Gastrocnemius medialis (tissue), 4 donors: ENCODE measurements at regions of chr2 and their contacts with region 1.

Region 1: GRCh38 chr2:27409321-27410073 is at the start of gene PPM1G:
- DNase-seq: peak; percentile 90 to 92
- ATAC-seq: peak; percentile 94 to 95
- H3K4me3 ChIP-seq: peak within 1 kb of the TSS; percentile 74 to 98 (median 96)
- H3K27ac ChIP-seq: peak within 1 kb of the TSS; percentile 89 to 97 (median 94)
- H3K4me1 ChIP-seq: peaks cover 15 to 24% of the 10 kb centered on the region in 2 donors
- H3K27me3 ChIP-seq: no peaks in the 10 kb centered on the region
- CTCF ChIP-seq: peak in 2 of 5 experiments; percentile 12 to 16
- POLR2A ChIP-seq: peak; percentile 57 to 72
- total RNA-seq, gene PPM1G: 47.2 to 111 (median 92.2) TPM

Region 2: DNA sequence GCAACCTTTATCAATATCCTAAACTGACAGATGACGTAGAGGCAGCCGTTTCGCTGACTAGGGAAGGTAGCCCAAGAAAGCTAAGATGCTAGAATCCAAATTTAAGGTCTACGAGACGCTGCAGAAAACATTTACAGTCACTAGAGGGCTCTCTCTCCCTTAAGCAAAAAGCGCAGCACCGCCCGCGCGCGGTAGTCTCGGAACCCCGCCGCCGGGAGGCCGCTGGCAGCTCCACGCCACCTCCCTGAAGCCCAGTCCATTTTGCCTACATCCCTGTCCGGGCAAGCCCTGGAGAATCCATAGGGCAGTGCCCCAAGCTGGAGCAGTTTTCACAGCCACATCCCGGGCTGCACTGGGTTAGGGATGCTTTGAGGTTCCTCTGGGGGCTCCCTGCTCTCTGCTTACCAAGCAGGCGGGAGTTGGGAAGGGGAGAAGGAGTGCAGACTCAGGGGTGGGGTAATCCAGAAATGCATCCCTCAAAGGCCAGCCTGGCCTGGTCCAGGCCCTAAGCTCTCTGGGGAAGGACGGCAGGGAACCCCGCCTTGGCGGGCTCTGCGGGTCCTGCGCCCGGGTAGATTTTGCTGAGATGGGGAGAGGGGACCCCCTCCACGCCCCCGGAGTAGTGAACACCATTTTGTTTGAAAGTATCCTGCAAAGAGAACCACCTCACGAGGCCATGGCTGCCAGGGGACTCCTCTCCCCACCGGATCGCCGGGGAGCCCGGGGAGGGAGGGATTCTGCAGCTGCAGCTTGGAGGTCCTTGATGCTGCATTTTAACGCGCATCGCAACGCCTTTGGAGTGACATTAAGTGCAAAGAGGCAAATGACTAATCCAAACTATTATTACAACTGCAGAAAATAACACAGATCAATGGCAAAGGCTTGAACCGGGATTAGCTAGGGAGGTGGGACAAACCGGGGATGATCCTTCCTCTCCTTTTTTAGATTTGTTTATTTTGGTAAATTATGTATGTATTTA is 562.9 kb before region 1 on chr2:
- in situ Hi-C with region 1: no loop called
- intact Hi-C with region 1: no loop called
- DNase-seq: peak; percentile 25 to 37
- ATAC-seq: peak; percentile 64 to 82
- H3K4me3 ChIP-seq: no peak overlapping the region
- H3K27ac ChIP-seq: no peak overlapping the region
- H3K4me1 ChIP-seq: peaks cover 7 to 27% of the 10 kb centered on the region in 2 donors
- H3K27me3 ChIP-seq: peaks cover 43 to 70% (median 60%) of the 10 kb centered on the region in 3 donors
- CTCF ChIP-seq: peak; percentile 58 to 81 (median 73)
- POLR2A ChIP-seq: no peak

Region 3: DNA sequence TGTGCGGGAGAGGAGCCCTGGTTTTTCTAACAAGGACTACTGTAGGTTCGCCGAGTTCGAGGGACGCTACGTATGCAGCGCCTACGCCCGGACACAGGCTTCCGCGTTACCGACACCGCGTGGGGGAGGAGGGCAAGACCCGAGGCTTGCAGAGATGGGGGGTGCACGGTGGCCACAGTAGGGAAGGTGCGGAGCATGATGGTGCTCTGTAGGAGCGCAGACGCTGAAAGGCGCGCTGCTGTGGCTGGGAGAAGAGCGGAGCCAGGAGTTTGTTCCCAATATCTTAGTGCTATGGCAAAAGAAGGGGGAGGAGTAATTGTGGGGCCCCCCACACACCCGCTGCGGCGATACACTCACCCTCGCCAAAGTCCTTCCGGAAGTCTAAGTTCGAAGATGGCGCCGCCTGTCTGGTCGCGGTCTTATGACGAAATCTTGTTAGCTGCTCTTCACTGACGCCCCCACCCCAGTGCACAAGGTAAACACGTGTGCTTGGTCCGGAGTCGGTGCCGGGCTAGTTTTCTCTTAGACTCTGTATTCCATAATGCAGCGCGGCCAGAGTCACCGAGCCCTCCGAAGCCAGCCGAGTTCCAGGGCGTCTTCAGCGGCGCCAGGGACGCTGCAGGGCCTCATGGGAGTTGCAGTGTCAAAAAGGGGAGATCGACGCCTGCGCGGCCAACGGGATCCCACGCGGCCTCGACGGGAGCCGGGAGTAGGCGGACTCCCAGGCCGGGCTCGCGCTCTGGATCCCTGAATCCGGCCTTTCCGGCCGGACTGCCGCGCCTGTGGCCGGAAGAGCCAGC is 52.9 kb before region 1 on chr2 and contains the start of gene GTF3C2:
- in situ Hi-C with region 1: no loop called
- intact Hi-C with region 1: loop called (anchors 1 kb)
- DNase-seq: peak; percentile 90 to 95
- ATAC-seq: peak; percentile 82 to 88
- H3K4me3 ChIP-seq: peak within 1 kb of the TSS; percentile 69 to 98 (median 93)
- H3K27ac ChIP-seq: peak within 1 kb of the TSS; percentile 92 to 99 (median 94)
- H3K4me1 ChIP-seq: peaks cover 42 to 50% of the 10 kb centered on the region in 2 donors
- H3K27me3 ChIP-seq: no peaks in the 10 kb centered on the region
- CTCF ChIP-seq: peak in 2 of 5 experiments; percentile 26 to 46
- POLR2A ChIP-seq: peak; percentile 50
- total RNA-seq, gene GTF3C2: 25.3 to 45.6 (median 40.5) TPM

Region 4: GRCh38 chr2:27380626-27381545 is 28.6 kb before region 1 on chr2 and contains the start of gene ZNF513:
- in situ Hi-C with region 1: no loop called
- intact Hi-C with region 1: loop called (anchors 2 kb)
- DNase-seq: peak; percentile 96 to 97
- ATAC-seq: peak; percentile 95
- H3K4me3 ChIP-seq: peak within 1 kb of the TSS; percentile 59 to 77 (median 70)
- H3K27ac ChIP-seq: peak within 1 kb of the TSS; percentile 84 to 91 (median 88)
- H3K4me1 ChIP-seq: peaks cover 18 to 19% of the 10 kb centered on the region in 2 donors
- H3K27me3 ChIP-seq: no peaks in the 10 kb centered on the region
- CTCF ChIP-seq: no peak
- POLR2A ChIP-seq: peak; percentile 63 to 68
- total RNA-seq, gene ZNF513: 2.0 to 7.6 (median 4.5) TPM

Region 5: GRCh38 chr2:27390822-27391679 is 18.4 kb before region 1 on chr2:
- in situ Hi-C with region 1: no loop called
- intact Hi-C with region 1: no loop called
- DNase-seq: no peak
- ATAC-seq: no peak
- H3K4me3 ChIP-seq: no peak overlapping the region
- H3K27ac ChIP-seq: no peak overlapping the region
- H3K4me1 ChIP-seq: no peaks in the 10 kb centered on the region
- H3K27me3 ChIP-seq: no peaks in the 10 kb centered on the region
- CTCF ChIP-seq: no peak
- POLR2A ChIP-seq: no peak

Region 6: DNA sequence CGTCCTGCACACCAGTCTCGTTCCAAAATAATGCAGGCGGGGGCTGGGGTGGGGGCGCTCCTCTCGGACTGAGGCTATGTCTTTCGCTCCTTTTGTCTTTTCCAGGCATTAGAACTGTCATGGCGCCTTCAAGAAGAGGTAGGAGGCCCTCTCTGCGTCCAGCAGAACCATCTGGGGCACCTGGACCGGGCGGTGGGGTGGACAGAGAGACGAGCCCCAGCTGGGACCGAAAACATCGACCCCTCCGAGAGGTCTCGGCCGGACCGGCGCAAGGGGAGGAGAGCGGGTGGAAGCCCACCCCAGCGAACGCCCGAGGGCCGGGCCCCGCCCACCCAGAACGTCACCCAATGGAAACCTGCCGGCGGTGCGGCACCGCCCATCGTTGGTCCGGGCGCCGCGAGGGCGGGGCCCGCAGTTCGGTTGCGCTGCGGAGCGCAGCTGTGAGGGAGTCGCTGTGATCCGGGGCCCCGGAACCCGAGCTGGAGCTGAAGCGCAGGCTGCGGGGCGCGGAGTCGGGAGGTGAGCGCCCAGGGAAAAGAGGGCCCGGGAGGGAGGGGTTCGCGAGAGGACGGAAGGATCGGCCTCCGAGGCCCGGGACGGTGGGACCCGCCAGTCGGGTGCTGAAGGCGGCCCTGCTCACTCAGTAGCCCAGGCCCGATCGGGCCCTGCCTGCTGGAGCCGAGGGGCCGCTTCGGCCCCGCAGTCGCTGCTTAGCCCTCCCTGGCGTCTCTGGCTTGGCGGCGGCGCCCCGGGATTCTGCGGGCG is 18.9 kb after region 1 on chr2 and contains the start of gene NRBP1:
- in situ Hi-C with region 1: no loop called
- intact Hi-C with region 1: loop called (anchors 1 kb)
- DNase-seq: peak; percentile 87 to 89
- ATAC-seq: peak; percentile 88 to 89
- H3K4me3 ChIP-seq: peak within 1 kb of the TSS; percentile 81 to 100 (median 98)
- H3K27ac ChIP-seq: peak within 1 kb of the TSS; percentile 93 to 100 (median 100)
- H3K4me1 ChIP-seq: peaks cover 34 to 43% of the 10 kb centered on the region in 2 donors
- H3K27me3 ChIP-seq: no peaks in the 10 kb centered on the region
- CTCF ChIP-seq: no peak
- POLR2A ChIP-seq: peak; percentile 94 to 97
- total RNA-seq, gene NRBP1: 91.8 to 125 (median 120) TPM

Region 7: GRCh38 chr2:27628767-27629709 is 219.5 kb after region 1 on chr2 and contains the starts of genes CCDC121 and GPN1:
- in situ Hi-C with region 1: no loop called
- intact Hi-C with region 1: loop called (anchors 1 kb)
- DNase-seq: peak; percentile 72 to 80
- ATAC-seq: peak; percentile 93 to 94
- H3K4me3 ChIP-seq: peak within 1 kb of the TSS; percentile 67 to 90 (median 87)
- H3K27ac ChIP-seq: peak within 1 kb of the TSS; percentile 77 to 84 (median 81)
- H3K4me1 ChIP-seq: peaks cover 17 to 27% of the 10 kb centered on the region in 2 donors
- H3K27me3 ChIP-seq: no peaks in the 10 kb centered on the region
- CTCF ChIP-seq: no peak
- POLR2A ChIP-seq: peak; percentile 49 to 50
- total RNA-seq, gene CCDC121: 0.56 to 2.0 (median 1.3) TPM
- total RNA-seq, gene GPN1: 21.0 to 30.0 (median 25.0) TPM

Region 8: GRCh38 chr2:27735263-27735953 is 325.9 kb after region 1 on chr2:
- in situ Hi-C with region 1: no loop called
- intact Hi-C with region 1: no loop called
- DNase-seq: peak; percentile 23 to 42
- ATAC-seq: peak; percentile 59 to 66
- H3K4me3 ChIP-seq: peak overlapping the region; percentile 51 to 65 (median 59)
- H3K27ac ChIP-seq: peak overlapping the region; percentile 35 to 74 (median 72)
- H3K4me1 ChIP-seq: peaks cover 13 to 15% of the 10 kb centered on the region in 2 donors
- H3K27me3 ChIP-seq: no peaks in the 10 kb centered on the region
- CTCF ChIP-seq: no peak
- POLR2A ChIP-seq: peak in 1 of 2 donors; percentile 34